Prostate gland (tissue), 2 donors: ENCODE measurements at regions of chr9 and their contacts with region 1.

Region 1: DNA sequence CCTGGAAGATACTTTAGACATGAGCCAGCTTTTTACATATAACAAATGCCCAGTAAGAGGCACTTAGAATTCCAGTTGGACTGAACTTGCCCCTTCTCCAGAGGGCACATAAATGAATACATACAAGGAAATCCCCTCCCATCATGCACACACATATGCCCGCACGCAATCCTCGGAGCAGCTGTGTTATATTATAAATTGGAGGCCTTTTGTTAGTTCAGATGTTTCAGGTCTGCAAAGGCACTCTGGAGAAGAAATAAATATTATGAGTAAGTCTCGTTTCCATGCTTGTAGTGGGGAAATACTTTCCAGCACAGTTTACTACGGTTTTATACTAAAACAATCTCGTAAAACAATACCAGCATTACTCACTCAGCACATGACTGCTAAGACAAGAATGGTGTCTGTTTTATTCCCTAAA is 17.6 kb upstream of the MUSK start:
- DNase-seq: no peak
- H3K4me3 ChIP-seq: no peak overlapping the region
- H3K27ac ChIP-seq: peak overlapping the region; percentile 9 to 51
- H3K4me1 ChIP-seq: no peaks in the 10 kb centered on the region
- H3K27me3 ChIP-seq: no peaks in the 10 kb centered on the region
- CTCF ChIP-seq: no peak
- POLR2A ChIP-seq: no peak

Region 2: DNA sequence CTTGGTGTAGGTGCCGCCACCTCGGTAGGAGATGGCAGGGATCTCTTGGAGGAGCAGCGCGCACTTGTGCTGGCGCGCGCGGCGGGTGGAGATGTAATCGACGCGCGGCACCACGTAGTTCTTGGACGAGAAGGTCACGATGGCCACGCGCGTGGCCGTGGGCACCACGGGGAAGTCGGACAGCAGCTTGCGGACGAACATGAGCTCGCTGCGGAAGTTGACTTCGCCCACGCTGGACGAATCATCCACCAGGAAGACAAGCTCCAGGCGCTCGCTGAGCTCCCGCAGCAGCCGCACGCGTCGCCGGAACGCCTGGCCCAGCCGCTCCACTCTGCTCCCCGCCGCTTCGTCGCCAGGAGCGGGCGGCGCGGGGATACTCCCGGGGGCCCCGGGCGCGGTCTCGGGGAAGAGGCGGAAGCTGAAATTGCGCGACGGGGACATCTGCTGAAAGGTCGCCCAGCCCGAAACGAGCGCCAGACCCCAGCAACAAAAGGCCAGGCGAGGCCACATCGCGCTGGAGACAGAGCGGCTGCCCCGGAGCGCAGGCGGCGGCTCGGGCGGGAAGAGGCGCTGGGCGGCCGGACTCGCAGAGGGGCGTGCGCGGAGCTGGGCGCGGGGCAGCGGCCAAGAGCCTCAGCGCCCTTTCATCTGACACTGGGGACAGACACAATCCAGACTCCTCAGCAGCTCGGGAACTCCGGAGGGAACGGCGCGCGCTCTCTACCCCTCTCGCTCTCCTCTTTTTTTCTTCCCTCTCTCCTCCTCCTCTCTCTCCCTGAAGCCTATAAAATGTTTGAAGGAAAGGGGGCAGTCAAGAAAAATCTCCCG is 71.8 kb before region 1 on chr9 and contains the start of gene SVEP1:
- intact Hi-C with region 1: no loop called
- DNase-seq: no peak
- H3K4me3 ChIP-seq: peak within 1 kb of the TSS; percentile 28 to 35
- H3K27ac ChIP-seq: peak within 1 kb of the TSS; percentile 7 to 21
- H3K4me1 ChIP-seq: no peaks in the 10 kb centered on the region
- H3K27me3 ChIP-seq: no peaks in the 10 kb centered on the region
- CTCF ChIP-seq: no peak
- POLR2A ChIP-seq: no peak
- total RNA-seq, gene SVEP1: 2.7 to 5.8 TPM

Region 3: DNA sequence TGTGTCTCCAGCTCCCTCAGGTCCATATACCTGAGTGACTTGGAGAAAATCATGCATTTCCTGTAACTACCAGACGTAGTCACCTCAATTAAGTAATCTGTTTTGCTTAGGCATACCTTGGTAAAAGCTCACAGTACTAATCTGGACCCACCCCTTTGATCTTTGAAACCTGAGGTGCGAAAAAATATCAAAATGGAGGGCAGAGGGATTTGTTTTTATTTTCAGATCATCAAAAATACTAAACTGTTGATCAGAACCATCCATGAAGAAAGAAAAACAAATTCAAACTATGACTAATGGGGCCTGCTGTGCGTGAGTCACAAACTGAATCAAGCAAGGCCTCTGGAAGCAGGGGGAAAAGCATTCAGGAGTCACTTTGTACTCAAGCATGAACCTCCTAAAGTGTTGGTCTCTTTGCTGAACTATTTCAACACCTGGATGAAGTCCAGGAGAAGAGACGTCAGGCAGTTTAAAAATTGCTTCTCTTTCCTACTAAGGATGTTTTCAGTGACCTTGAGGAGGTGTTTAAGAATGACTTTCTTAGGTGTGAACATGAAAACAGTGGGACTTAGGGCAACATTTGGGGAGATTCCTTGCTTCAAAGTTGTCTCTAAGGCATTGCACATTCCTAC is 93.9 kb after region 1 on chr9:
- intact Hi-C with region 1: loop called (anchors 2 kb)
- DNase-seq: peak; percentile 26
- H3K4me3 ChIP-seq: no peak overlapping the region
- H3K27ac ChIP-seq: peak overlapping the region; percentile 69 to 73
- H3K4me1 ChIP-seq: no peaks in the 10 kb centered on the region
- H3K27me3 ChIP-seq: no peaks in the 10 kb centered on the region
- CTCF ChIP-seq: no peak
- POLR2A ChIP-seq: no peak